GM10248 (cell line): ENCODE measurements at regions of chr2 and their contacts with region 1.

Region 1: DNA sequence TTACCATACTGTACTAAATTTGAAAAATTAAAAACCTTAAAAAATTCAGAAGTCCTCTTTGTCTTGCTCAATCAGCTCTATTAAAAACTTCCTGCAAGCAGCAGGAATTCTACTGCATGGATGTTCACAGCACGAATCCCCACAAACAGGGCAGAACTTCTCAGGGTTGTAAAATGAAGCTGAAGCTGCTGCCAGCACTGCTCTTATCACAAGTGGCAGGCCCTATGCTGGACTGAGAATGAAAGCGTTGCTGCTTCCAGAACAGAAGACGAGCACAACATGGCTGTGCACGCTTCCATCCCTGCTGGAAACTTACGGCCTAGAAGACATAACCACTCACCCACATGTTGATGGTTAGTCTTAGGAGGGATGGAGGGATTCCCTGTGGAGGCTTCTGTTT is 134.0 kb downstream of the RAB3GAP1 start:
- DNase-seq: no peak
- CTCF ChIP-seq: no peak

Region 2: DNA sequence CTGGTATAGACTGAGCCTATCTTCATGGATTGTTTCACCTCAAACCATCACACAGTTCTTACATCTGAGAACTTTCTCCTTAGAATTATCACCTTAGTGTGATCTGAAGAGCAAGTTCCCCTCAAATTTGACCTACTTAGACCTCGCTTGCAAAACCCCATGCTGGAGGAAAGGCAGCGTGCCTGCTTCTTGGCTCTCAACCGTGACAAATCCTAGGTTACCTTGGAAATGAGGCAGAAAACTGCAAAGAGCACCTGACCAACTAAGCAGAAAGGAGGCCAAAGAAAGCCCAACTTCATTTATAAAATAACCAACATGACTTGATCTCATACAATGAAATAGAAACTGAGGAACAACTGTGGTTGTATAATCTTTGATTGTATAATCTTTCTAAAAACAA is 12.4 kb after region 1 on chr2:
- CTCF ChIA-PET with region 1: interaction called, 10 read pairs
- POLR2A ChIA-PET with region 1: no interaction called
- DNase-seq: no peak
- CTCF ChIP-seq: no peak

Region 3: DNA sequence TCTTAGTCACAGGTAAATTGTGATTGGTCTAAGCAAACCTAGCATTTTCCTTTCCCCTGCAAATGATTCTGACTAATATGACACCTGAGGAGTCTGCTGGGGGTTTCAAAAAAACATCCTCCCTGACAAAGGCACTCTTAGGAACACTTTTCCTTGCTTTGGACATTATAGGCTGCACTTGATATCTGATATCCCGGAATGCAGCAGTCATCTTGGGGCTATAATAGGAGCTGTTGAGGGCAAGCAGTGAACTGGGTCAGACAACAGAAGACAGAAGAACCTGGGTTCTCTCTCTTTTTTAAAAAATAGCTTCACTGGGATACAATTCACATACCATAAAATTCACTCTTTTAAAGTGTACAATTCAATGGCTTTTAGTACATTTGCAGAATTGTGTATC is 95.3 kb after region 1 on chr2:
- CTCF ChIA-PET with region 1: no interaction called
- POLR2A ChIA-PET with region 1: no interaction called
- DNase-seq: no peak
- CTCF ChIP-seq: no peak